Right ventricle myocardium inferior (tissue), 1 donor: ENCODE measurements at regions of chr13 and their contacts with region 1.

Region 1: DNA sequence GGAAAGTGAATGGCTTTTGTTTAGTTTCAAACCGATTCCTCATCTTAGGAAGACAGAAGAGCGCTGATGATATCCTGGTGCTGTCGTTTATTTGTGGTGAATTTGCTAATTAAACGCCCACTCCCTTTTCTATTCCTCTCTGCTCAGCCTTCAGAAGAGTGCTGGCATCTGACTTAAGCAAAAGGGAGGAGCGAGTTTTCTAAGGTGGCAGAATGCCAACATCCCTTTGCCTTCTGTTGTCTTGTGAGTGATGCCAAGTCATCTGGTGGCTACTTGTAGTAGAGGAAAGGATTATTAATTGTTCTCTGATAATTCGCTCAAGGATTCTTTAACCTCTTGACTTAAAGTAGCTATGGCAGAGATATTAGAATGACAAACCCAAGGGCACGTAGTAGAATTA is 68.1 kb downstream of the ERCC5 start:
- DNase-seq: no peak
- ATAC-seq: no peak

Region 2: DNA sequence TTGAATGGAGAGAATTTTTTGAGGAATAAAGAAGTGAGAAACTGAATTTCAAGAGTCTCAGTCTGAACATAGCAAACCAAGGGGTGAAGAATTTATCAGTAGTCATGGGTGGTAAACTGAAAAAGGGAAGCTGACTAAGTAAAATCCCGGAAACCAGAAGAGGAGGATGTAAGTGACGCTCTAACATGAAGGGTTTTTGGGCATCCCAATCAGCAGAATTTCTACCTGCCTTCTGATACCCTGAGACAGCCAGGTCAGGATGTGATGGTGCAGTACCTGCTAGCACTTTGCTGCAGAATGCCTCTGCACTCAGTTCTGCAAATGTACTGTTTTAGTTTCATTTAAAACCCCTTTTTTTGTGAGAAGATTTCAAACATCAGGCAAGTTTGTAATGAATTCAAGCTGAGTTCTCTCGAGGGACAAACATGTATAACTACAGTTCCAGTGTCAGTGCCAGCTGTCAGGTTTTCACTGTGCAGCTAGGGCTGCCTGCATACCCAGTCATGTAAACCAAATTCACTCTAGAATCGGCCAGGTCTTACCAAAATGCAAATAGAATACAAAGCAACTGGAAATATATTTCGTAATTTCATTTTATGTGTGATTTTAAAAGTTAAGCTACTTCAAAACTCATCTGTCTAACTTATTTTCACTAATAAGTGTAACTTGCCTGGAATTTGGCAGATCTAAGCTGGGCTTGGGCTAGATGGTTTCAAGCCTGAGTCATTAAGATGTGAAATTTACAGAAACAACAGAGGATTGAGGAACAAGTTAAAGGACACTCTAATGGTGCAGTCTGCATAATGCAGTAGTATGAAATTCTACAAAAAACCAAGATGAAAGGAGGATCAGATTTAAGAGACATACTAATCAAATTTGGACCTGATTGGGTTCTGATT is 232.8 kb before region 1 on chr13:
- intact Hi-C with region 1: no loop called
- DNase-seq: no peak
- ATAC-seq: no peak

Region 3: DNA sequence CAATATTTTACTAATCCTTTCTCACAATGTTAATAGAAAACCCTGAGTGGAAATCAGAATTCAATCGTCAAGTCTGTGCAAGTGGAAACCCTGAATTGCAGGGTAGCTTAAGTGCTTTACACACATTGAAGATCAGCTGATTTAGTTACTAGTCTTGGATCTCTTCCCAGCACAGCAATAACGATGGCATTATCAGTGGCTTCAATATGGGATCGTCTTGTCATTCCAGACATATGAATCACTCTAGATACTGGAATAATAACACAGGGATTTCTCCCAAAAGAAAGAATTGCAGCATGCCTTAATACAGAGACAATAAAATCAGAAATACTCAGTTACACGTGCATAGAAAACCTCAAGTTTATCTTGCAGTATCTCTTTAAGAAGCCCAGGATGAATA is 206.4 kb before region 1 on chr13:
- intact Hi-C with region 1: no loop called
- DNase-seq: no peak
- ATAC-seq: no peak

Region 4: DNA sequence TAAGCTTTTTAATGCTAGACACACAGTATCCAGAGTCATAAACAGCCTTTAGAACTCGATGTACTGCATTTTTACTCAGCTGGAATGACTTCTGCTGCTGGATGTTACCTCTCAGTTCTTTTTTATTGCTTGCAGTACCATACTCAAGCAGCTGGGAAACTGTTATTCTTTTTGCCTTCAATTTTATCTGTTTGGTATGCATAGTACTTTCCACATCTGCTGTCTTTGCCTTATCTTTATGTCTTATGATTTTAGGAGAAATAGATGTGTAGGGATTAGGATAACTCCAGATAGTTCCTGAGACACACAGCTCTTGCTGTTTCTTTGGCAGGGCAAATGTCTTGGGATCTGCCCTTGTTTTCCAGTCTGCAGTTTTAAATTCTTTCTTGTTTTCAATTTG is 171.8 kb before region 1 on chr13:
- intact Hi-C with region 1: no loop called
- DNase-seq: no peak
- ATAC-seq: no peak

Region 5: GRCh38 chr13:102870677-102871415 is 43.1 kb before region 1 on chr13:
- intact Hi-C with region 1: loop called (anchors 5 kb)
- DNase-seq: peak; percentile 72
- ATAC-seq: peak; percentile 83

Region 6: GRCh38 chr13:103140001-103140671 is 226.2 kb after region 1 on chr13:
- intact Hi-C with region 1: loop called (anchors 5 kb)
- DNase-seq: no peak
- ATAC-seq: peak; percentile 37

Region 7: GRCh38 chr13:103788061-103788652 is 874.2 kb after region 1 on chr13:
- intact Hi-C with region 1: loop called (anchors 5 kb)
- DNase-seq: no peak
- ATAC-seq: peak; percentile 59